ENCODE measurements at regions of chr3 and their contacts with region 1.

Region 1: GRCh38 chr3:98994128-98994762 is 92.8 kb upstream of the DCBLD2 start:
- DNase-seq: peak; percentile 76
- H3K4me3 ChIP-seq: no peak overlapping the region
- H3K27ac ChIP-seq: no peak overlapping the region
- H3K4me1 ChIP-seq: no peaks in the 10 kb centered on the region
- H3K27me3 ChIP-seq: no peaks in the 10 kb centered on the region
- CTCF ChIP-seq: peak; percentile 40 to 50
- POLR2A ChIP-seq: no peak

Region 2: DNA sequence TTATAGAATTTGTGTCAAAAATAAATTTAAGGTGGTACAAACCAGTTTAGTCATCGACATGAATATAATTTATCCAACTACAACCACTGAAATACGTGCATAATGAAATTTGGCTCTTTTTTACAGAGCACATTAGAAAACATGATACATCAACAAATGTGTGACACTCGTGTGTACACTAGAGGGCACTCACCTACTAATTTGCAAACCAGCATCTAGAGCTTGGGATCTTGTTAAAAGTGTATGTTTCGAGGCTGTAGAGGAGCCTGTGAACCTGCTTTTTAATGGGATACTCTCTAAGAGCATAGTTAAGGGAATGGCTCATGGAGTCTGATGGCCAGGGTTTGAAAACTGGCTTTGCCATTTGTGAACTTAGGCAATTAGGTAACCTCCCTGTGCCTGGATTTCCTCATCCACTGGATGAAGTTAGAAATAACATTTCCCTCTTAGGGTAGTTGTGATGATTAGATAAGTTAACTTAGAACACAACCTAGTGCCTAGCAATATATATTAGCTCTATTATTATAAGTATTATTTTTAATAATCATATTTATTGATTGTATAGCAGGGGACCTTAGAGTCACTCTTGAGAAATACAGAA is 392.1 kb before region 1 on chr3:
- CTCF ChIA-PET with region 1: interaction called, 25 read pairs
- POLR2A ChIA-PET with region 1: no interaction called
- dilution Hi-C with region 1: no loop called
- intact Hi-C with region 1: loop called (anchors 2 kb)
- DNase-seq: peak; percentile 76
- H3K4me3 ChIP-seq: no peak overlapping the region
- H3K27ac ChIP-seq: no peak overlapping the region
- H3K4me1 ChIP-seq: no peaks in the 10 kb centered on the region
- H3K27me3 ChIP-seq: no peaks in the 10 kb centered on the region
- CTCF ChIP-seq: peak; percentile 60 to 74
- POLR2A ChIP-seq: no peak

Region 3: DNA sequence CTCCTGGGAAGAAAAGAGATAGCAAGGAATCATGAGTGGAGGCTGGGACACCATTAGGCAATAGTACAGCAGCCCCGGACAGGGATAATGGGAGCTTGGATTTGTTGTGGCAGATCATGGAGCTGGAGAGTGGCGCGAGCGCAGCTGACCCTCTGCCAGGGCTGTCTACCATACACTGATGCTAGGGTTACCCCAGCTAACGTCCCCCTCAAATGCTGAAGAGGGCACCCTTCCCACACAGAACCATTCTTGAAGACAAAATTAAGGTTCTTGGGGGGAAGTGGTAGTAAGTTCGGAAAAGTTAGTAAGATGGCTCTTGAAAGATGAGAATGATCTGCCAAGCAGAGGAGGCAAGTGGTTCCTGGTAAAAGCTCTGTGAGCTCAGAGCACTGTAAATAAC is 170.0 kb before region 1 on chr3:
- CTCF ChIA-PET with region 1: interaction called, 34 read pairs
- POLR2A ChIA-PET with region 1: no interaction called
- dilution Hi-C with region 1: no loop called
- intact Hi-C with region 1: no loop called
- DNase-seq: no peak
- H3K4me3 ChIP-seq: no peak overlapping the region
- H3K27ac ChIP-seq: no peak overlapping the region
- H3K4me1 ChIP-seq: no peaks in the 10 kb centered on the region
- H3K27me3 ChIP-seq: no peaks in the 10 kb centered on the region
- CTCF ChIP-seq: peak in 1 of 2 donors; percentile 14
- POLR2A ChIP-seq: no peak

Region 4: DNA sequence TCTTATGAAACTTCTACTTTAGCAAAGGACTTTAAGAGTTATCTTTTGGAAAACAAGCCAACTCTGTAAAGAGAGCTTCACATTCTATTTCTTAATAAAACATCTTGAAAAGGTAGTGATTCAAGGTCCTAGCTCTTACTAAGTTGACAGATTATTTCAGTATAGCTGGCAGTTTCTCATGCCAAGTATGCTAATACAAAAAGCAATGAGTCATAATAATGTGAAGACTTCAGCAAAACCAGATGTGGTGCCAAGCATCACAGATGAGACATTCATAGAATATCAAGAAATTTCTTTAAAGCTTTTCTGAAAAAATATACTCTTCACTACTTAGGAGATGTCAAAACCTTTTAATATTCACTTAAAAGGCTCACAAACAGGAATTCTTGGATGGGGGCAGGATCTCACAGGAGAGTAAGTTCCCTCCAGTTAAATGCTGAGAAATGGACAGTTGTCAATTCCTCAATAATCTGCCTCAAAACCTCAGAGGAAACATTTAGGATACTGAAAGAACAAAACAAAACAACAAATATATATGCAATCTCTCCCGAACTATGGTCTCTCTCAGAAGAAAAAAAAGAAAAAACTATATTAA is 138.3 kb before region 1 on chr3:
- CTCF ChIA-PET with region 1: interaction called, 11 read pairs
- POLR2A ChIA-PET with region 1: no interaction called
- dilution Hi-C with region 1: no loop called
- intact Hi-C with region 1: no loop called
- DNase-seq: peak; percentile 84
- H3K4me3 ChIP-seq: no peak overlapping the region
- H3K27ac ChIP-seq: peak overlapping the region; percentile 22
- H3K4me1 ChIP-seq: peaks cover 13% of the 10 kb centered on the region
- H3K27me3 ChIP-seq: no peaks in the 10 kb centered on the region
- CTCF ChIP-seq: no peak
- POLR2A ChIP-seq: no peak

Region 5: GRCh38 chr3:98901392-98902350 is 92.6 kb before region 1 on chr3 and contains the start of gene DCBLD2:
- CTCF ChIA-PET with region 1: interaction called, 32 read pairs
- POLR2A ChIA-PET with region 1: interaction called, 7 read pairs
- dilution Hi-C with region 1: no loop called
- intact Hi-C with region 1: loop called (anchors 2 kb)
- DNase-seq: peak; percentile 99
- H3K4me3 ChIP-seq: peak within 1 kb of the TSS; percentile 77 to 93 (median 92)
- H3K27ac ChIP-seq: peak within 1 kb of the TSS; percentile 88
- H3K4me1 ChIP-seq: peaks cover 41% of the 10 kb centered on the region
- H3K27me3 ChIP-seq: no peaks in the 10 kb centered on the region
- CTCF ChIP-seq: no peak
- POLR2A ChIP-seq: peak; percentile 97
- total RNA-seq, gene DCBLD2: 62.6 and 77.3 TPM in 2 replicates

Region 6: DNA sequence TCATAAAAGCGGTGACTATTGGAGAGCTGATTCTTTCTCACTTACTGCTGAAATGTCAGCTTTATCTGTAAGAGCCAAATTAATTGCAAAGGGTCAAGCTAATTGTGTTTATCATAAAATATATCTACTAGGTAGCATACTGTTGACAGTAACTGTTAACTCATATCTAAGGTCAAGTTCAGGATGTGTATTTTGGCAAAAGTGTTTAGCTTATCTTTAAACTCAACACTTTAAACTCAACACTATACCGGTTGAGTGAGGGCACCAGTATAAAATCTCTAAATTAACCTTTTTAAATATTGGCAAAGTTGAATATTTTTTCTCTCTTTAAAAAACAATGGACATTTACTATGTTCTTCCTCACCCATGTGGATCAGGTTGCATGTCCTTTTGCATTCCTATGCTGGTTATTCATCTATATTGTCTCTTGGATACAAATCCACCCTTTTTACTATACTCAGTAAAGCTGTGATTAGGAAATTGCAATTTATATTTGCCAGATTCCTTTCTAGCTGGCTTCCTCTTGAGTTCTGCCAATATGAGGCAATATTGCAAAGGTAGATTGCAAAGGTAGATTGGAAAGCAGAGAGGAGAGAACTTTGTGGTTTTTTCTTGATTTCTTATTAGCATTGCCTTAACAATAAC is 251.9 kb after region 1 on chr3:
- CTCF ChIA-PET with region 1: no interaction called
- POLR2A ChIA-PET with region 1: no interaction called
- dilution Hi-C with region 1: no loop called
- intact Hi-C with region 1: no loop called
- DNase-seq: peak; percentile 62
- H3K4me3 ChIP-seq: no peak overlapping the region
- H3K27ac ChIP-seq: no peak overlapping the region
- H3K4me1 ChIP-seq: peaks cover 23% of the 10 kb centered on the region
- H3K27me3 ChIP-seq: no peaks in the 10 kb centered on the region
- CTCF ChIP-seq: no peak
- POLR2A ChIP-seq: no peak

Region 7: DNA sequence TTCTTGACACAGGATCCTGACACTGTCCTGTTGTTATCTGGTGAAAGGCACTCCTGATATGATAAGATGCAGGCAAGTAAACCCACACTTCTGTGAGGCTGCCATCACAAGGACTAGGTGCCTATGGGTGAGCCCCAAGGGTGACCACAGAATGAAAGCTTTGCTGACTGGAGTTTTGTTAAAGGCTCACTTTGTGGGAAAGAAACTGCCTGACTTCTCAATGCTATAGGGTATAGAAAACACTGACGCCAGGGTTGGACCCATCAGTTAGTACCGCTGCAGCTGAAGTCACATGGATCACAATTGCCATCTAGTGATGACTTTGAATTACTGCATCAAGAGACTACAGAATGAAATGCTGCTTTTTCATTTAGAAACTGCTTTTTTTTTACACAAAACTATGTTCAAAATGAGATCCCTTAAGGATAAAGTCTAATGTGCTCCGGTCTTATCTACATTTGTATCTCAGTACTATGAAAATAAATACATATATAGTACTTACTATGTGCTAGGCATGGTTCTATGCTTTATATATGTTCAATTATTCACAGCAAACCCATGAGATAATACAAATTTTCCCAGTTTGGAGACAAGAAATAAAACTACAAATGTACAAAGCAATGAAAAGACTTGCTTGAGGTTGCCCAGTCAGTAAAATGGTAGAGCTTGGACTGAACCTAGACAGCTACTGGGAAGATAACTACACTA is 759.2 kb after region 1 on chr3:
- CTCF ChIA-PET with region 1: interaction called, 11 read pairs
- POLR2A ChIA-PET with region 1: no interaction called
- dilution Hi-C with region 1: no loop called
- intact Hi-C with region 1: no loop called
- DNase-seq: peak; percentile 77
- H3K4me3 ChIP-seq: no peak overlapping the region
- H3K27ac ChIP-seq: peak overlapping the region; percentile 21
- H3K4me1 ChIP-seq: peaks cover 28% of the 10 kb centered on the region
- H3K27me3 ChIP-seq: no peaks in the 10 kb centered on the region
- CTCF ChIP-seq: peak; percentile 56 to 58
- POLR2A ChIP-seq: no peak

Measured in endothelial cell of umbilical vein (primary cell).